CD8-positive, alpha-beta T cell (primary cell): ENCODE measurements at regions of chr4 and their contacts with region 1.

Region 1: GRCh38 chr4:185425647-185426352 is at the start of gene UFSP2:
- DNase-seq: peak; percentile 75 to 97 (median 89)
- ATAC-seq: peak; percentile 86
- H3K4me3 ChIP-seq: peak within 1 kb of the TSS; percentile 87 to 90
- H3K4me3 Mint-ChIP-seq: peak within 1 kb of the TSS; percentile 83
- H3K27ac ChIP-seq: peak within 1 kb of the TSS; percentile 97 to 99
- H3K27ac Mint-ChIP-seq: peak within 1 kb of the TSS; percentile 100
- H3K4me1 ChIP-seq: peaks cover 18% of the 10 kb centered on the region
- H3K4me1 Mint-ChIP-seq: peaks cover 36% of the 10 kb centered on the region
- H3K27me3 ChIP-seq: no peaks in the 10 kb centered on the region
- H3K27me3 Mint-ChIP-seq: peaks cover 5% of the 10 kb centered on the region
- CTCF ChIP-seq: no peak
- total RNA-seq, gene UFSP2: 13.4 to 17.4 TPM

Region 2: DNA sequence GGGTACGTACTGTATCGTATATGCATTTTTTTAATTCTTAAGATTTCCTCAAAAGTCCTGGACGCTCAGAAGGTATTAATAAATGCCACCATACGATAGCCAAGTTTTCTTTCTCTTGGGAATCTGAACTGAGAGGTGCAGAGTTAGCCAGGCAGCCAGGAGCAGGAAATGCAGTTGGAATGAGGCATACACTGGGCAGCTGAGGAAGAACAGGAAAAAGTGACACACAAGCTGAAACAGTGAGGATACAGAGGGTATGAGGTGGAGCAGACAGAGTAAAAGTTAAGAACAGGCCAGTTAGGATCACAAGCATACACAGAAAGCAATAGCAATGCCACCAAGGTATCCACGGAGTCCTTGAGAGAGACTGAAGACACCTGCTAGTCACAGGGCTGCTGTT is 13.4 kb before region 1 on chr4:
- CTCF ChIA-PET with region 1: no interaction called
- POLR2A ChIA-PET with region 1: no interaction called
- intact Hi-C with region 1: no loop called
- DNase-seq: no peak
- ATAC-seq: no peak
- H3K4me3 ChIP-seq: no peak overlapping the region
- H3K4me3 Mint-ChIP-seq: no peak overlapping the region
- H3K27ac ChIP-seq: no peak overlapping the region
- H3K27ac Mint-ChIP-seq: no peak overlapping the region
- H3K4me1 ChIP-seq: no peaks in the 10 kb centered on the region
- H3K4me1 Mint-ChIP-seq: peaks cover 2% of the 10 kb centered on the region
- H3K27me3 ChIP-seq: no peaks in the 10 kb centered on the region
- H3K27me3 Mint-ChIP-seq: no peaks in the 10 kb centered on the region
- CTCF ChIP-seq: no peak

Region 3: DNA sequence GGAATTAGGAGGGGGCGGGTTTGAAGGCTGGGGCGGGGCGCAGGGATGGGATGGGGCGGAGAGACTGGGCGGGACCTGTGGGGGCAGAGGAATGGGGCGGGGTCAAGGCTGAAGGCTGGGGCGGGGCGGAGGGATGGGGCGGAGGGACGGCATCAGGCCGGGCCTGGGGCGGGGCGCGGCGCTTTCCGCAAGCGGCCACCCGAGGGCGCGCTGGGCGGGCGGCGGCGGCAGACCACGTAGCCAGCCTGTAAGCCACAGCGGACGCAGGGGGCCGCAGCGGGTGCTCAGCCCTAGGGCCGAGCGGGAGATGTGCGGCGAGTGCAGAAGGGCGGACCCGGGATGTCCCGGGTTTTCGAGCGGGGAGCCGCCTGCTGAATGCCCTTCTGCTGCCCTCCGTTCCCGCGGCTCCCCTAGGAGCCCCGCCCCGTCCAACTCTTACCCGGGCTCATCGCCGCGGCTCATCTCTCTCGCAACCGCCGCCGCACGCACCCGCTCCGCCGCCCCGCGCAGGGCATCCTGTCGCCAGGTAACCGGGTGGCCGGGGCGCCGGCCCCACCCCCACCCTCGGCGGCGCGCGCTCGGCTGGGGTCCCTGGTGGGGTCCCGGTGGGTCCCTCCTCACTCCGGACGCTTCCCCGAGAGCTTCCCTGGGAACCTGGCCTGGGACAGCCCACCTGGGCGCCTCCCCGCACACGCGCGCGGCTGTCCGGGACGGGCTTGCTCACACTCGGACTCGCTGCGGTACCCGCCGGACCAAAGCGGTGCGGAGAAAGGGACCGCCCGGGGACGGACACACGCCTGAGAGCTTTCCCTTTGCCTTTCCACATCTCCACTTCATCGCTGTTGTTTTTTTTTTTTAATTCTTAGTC is 45.7 kb after region 1 on chr4 and contains the start of gene CCDC110:
- CTCF ChIA-PET with region 1: interaction called, 4 read pairs
- POLR2A ChIA-PET with region 1: interaction called, 6 read pairs
- intact Hi-C with region 1: loop called (anchors 1 kb)
- DNase-seq: peak; percentile 79 to 96 (median 88)
- ATAC-seq: peak; percentile 95
- H3K4me3 ChIP-seq: peak within 1 kb of the TSS; percentile 60 to 85
- H3K4me3 Mint-ChIP-seq: peak within 1 kb of the TSS; percentile 93
- H3K27ac ChIP-seq: peak within 1 kb of the TSS; percentile 27 to 34
- H3K27ac Mint-ChIP-seq: peak within 1 kb of the TSS; percentile 67
- H3K4me1 ChIP-seq: peaks cover 13% of the 10 kb centered on the region
- H3K4me1 Mint-ChIP-seq: peaks cover 16% of the 10 kb centered on the region
- H3K27me3 ChIP-seq: no peaks in the 10 kb centered on the region
- H3K27me3 Mint-ChIP-seq: peaks cover 2% of the 10 kb centered on the region
- CTCF ChIP-seq: peak; percentile 64
- total RNA-seq, gene CCDC110: 0.57 TPM in 1 of 2 experiments, not detected in the other